CD8-positive, alpha-beta memory T cell (primary cell): ENCODE measurements at regions of chr19 and their contacts with region 1.

Region 1: DNA sequence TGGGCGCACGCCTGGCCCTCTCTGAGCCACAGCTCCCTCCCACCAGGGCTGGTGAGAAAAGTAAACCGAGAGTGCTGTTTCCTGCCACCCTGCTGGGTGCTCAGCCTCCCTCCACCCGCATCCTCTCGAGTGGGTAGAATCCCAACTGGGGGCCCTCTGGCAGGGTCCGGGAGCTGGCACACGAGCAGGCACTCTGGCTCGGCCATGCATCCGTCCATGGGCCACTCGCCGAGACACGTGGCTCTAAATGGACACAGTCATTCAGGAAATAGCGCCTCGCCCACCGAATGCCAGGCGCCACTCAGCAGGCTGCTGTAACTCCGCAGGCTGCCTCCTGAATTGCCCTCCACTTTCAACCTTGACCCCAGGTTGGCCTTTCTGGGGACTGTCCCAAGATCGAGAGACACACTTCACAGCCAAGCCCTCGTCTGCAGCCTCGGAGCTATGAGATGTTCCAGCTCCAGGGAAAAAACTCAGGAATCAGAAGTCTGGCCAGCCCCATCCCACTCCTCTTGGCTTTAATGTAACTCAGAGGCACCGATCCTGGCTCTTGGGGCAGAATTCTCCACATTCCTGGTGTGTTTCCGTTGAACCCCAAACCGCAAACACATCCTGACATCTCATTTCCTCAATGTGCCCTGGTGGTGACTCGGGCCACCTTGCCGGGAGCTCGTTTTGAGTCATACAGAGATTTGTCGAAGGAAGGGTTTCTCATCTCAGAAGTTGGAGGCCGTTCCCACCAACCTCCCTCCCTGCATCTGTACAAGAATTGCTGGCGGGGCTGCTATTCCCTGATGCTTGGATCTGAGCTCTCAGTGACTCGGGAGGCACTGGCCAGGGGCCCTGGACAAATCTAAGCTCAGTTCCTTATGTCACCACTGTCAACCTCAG is 14.1 kb downstream of the KLF2 start:
- DNase-seq: peak; percentile 36 to 67 (median 48)
- H3K4me3 ChIP-seq: peak overlapping the region; percentile 59
- H3K4me3 Mint-ChIP-seq: peak overlapping the region; percentile 76 to 94 (median 88)
- H3K27ac ChIP-seq: peak overlapping the region; percentile 50
- H3K27ac Mint-ChIP-seq: peak overlapping the region; percentile 82 to 99 (median 96)
- H3K4me1 ChIP-seq: peaks cover 73% of the 10 kb centered on the region
- H3K4me1 Mint-ChIP-seq: peaks cover 63 to 70% (median 69%) of the 10 kb centered on the region in 3 donors
- H3K27me3 ChIP-seq: no peaks in the 10 kb centered on the region
- H3K27me3 Mint-ChIP-seq: no peaks in the 10 kb centered on the region

Region 2: DNA sequence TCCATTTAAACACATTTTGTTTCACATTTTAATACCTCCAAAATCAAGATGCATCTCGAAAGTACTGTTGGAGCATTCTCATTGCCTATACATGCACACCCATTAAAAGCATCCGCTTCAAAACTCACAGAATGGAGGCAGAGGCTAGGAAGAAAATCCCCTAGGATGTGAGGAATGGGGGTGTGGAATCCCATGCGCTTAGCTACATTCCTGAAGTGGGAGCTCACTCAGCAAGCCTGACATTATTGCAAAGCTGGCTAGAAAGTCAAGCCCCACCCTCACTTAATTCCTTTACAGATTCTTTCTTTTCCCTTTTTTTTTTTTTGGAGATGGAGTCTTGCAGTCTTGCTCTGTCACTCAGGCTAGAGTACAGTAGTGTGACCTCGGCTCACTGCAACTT is 158.1 kb before region 1 on chr19:
- CTCF ChIA-PET with region 1: no interaction called
- POLR2A ChIA-PET with region 1: no interaction called
- DNase-seq: no peak
- H3K4me3 ChIP-seq: no peak overlapping the region
- H3K4me3 Mint-ChIP-seq: no peak overlapping the region
- H3K27ac ChIP-seq: no peak overlapping the region
- H3K27ac Mint-ChIP-seq: no peak overlapping the region
- H3K4me1 ChIP-seq: peaks cover 5% of the 10 kb centered on the region
- H3K4me1 Mint-ChIP-seq: peaks cover 11 to 18% (median 16%) of the 10 kb centered on the region in 3 donors
- H3K27me3 ChIP-seq: no peaks in the 10 kb centered on the region
- H3K27me3 Mint-ChIP-seq: peaks cover 0 to 3% of the 10 kb centered on the region in 2 donors

Region 3: GRCh38 chr19:16355293-16356043 is 16.8 kb after region 1 on chr19:
- CTCF ChIA-PET with region 1: interaction called, 403 read pairs
- POLR2A ChIA-PET with region 1: interaction called, 1,176 read pairs
- DNase-seq: no peak
- H3K4me3 ChIP-seq: no peak overlapping the region
- H3K4me3 Mint-ChIP-seq: peak overlapping the region in 5 of 7 donors; percentile 16 to 75 (median 50)
- H3K27ac ChIP-seq: no peak overlapping the region
- H3K27ac Mint-ChIP-seq: peak overlapping the region in 4 of 8 donors; percentile 19 to 69 (median 33)
- H3K4me1 ChIP-seq: peaks cover 75% of the 10 kb centered on the region
- H3K4me1 Mint-ChIP-seq: peaks cover 52 to 75% (median 65%) of the 10 kb centered on the region in 3 donors
- H3K27me3 ChIP-seq: no peaks in the 10 kb centered on the region
- H3K27me3 Mint-ChIP-seq: no peaks in the 10 kb centered on the region

Region 4: GRCh38 chr19:16371540-16371986 is 32.8 kb after region 1 on chr19:
- CTCF ChIA-PET with region 1: interaction called, 403 read pairs
- POLR2A ChIA-PET with region 1: interaction called, 1,176 read pairs
- DNase-seq: peak; percentile 86 to 97 (median 96)
- H3K4me3 ChIP-seq: peak overlapping the region; percentile 46
- H3K4me3 Mint-ChIP-seq: no peak overlapping the region
- H3K27ac ChIP-seq: peak overlapping the region; percentile 84
- H3K27ac Mint-ChIP-seq: no peak overlapping the region
- H3K4me1 ChIP-seq: peaks cover 96% of the 10 kb centered on the region
- H3K4me1 Mint-ChIP-seq: peaks cover 0 to 43% (median 33%) of the 10 kb centered on the region in 3 donors
- H3K27me3 ChIP-seq: no peaks in the 10 kb centered on the region
- H3K27me3 Mint-ChIP-seq: peaks cover 0 to 7% of the 10 kb centered on the region in 2 donors

Region 5: GRCh38 chr19:16417660-16418596 is 79.2 kb after region 1 on chr19:
- CTCF ChIA-PET with region 1: no interaction called
- POLR2A ChIA-PET with region 1: no interaction called
- DNase-seq: peak; percentile 40 to 78 (median 56)
- H3K4me3 ChIP-seq: no peak overlapping the region
- H3K4me3 Mint-ChIP-seq: no peak overlapping the region
- H3K27ac ChIP-seq: no peak overlapping the region
- H3K27ac Mint-ChIP-seq: peak overlapping the region in 4 of 8 donors; percentile 57 to 79 (median 70)
- H3K4me1 ChIP-seq: peaks cover 7% of the 10 kb centered on the region
- H3K4me1 Mint-ChIP-seq: peaks cover 0 to 9% (median 8%) of the 10 kb centered on the region in 3 donors
- H3K27me3 ChIP-seq: no peaks in the 10 kb centered on the region
- H3K27me3 Mint-ChIP-seq: peaks cover 0 to 3% of the 10 kb centered on the region in 2 donors

Region 6: DNA sequence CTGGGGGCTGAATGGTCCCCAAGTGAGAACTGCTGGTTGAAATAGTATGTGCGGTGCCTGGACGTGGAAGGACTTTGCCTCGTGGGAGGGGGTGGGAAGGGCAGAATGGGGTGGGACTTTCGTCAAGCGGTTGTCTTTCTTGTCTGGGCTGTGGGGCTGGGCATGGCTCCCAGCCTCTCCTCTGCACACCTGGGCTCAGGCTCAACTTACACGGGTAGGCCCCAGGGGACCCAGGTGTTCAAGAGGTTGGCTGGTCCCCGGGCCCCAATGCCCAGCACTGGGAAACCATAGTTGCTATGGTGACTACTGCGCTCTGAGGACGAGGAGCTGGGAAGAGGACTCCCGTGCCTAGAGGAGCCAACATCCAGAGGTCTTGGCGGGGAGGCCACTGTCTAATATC is 388.2 kb after region 1 on chr19:
- CTCF ChIA-PET with region 1: no interaction called
- POLR2A ChIA-PET with region 1: no interaction called
- DNase-seq: no peak
- H3K4me3 ChIP-seq: no peak overlapping the region
- H3K4me3 Mint-ChIP-seq: no peak overlapping the region
- H3K27ac ChIP-seq: no peak overlapping the region
- H3K27ac Mint-ChIP-seq: no peak overlapping the region
- H3K4me1 ChIP-seq: no peaks in the 10 kb centered on the region
- H3K4me1 Mint-ChIP-seq: no peaks in the 10 kb centered on the region
- H3K27me3 ChIP-seq: no peaks in the 10 kb centered on the region
- H3K27me3 Mint-ChIP-seq: peaks cover 2 to 8% of the 10 kb centered on the region in 2 donors